Heart right ventricle (tissue), 16 donors: ENCODE measurements at regions of chr9 and their contacts with region 1.

Region 1: DNA sequence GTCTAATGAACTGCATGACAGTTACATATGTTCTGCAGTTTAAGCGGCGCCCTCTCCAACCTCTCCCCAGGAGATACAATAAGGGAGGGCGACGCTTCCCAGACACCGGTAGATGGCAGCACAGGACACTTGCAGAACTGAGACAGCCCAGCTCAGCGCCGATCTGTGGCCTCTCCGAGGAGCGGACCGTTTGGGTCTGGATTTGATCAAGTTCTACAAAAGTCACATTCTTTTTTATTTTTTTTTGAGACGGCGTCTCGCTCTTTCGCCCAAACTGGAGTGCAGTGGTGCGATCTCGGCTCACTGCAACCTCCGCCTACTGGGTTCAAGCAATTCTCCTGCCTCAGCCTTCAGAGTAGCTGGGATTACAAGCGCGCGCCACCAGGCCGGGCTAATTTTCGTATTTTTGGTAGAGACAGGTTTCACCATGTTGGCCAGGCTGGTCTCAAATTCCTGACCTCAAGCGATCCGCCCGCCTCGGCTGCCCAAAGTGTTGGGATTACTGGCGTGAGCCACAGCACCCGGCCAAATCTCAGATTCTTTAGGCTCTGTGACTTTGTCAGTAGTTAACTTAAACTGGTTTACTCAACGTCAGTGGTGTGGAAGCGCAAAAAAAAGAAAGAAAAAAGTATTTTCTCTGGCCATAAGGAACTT is 1.4 kb upstream of the ATOSB start:
- DNase-seq: peak; percentile 83 to 95
- ATAC-seq: peak; percentile 71 to 87 (median 82)
- H3K4me3 ChIP-seq: peak overlapping the region; percentile 26 to 78 (median 66)
- H3K27ac ChIP-seq: peak overlapping the region in 9 of 10 donors; percentile 84 to 98 (median 94)
- H3K4me1 ChIP-seq: peaks cover 6 to 48% (median 39%) of the 10 kb centered on the region in 9 donors
- H3K27me3 ChIP-seq: no peaks in the 10 kb centered on the region
- CTCF ChIP-seq: peak; percentile 94 to 97 (median 95)

Region 2: GRCh38 chr9:35258676-35259474 is 141.8 kb after region 1 on chr9:
- intact Hi-C with region 1: loop called (anchors 1 to 5 kb)
- DNase-seq: peak; percentile 60 to 73
- ATAC-seq: peak; percentile 47 to 78 (median 66)
- H3K4me3 ChIP-seq: no peak overlapping the region
- H3K27ac ChIP-seq: no peak overlapping the region
- H3K4me1 ChIP-seq: peaks cover 0 to 10% (median 5%) of the 10 kb centered on the region in 9 donors
- H3K27me3 ChIP-seq: no peaks in the 10 kb centered on the region
- CTCF ChIP-seq: peak; percentile 44 to 85 (median 72)

Region 3: DNA sequence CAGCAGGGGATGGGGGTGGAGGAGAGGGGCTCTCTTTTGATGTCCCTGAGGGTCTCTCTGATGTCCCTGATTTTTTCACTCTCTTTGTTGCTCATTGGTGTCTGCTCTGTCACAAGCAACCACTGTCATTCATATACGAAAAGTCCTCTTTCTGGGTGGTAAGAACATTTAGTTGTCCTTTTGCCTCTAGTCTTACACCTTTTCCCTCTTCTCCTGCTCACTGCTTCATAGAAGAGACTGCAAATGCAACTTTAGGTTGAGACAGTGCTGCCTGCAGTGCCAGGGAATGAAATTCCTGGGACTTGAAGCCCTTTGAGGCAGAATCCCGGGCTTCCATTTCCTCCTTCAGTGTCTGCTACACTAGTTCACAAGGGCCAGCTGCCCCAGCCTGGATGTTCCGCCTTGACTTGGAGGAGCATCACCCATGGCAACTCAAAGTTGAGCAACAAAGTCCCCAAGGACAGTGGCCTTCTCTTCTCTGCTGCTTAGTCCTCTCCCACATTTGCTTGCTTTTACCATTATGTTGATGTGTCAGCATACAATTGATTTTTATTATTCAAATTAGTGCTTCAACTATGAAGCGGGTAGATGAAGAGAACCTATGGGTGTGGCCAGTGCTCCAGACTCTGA is 278.2 kb after region 1 on chr9:
- intact Hi-C with region 1: loop called in 2 of 10 experiments (anchors 10 kb)
- DNase-seq: no peak
- ATAC-seq: peak in 2 of 8 donors; percentile 29 to 72
- H3K4me3 ChIP-seq: no peak overlapping the region
- H3K27ac ChIP-seq: no peak overlapping the region
- H3K4me1 ChIP-seq: peaks cover 0 to 3% (median 0%) of the 10 kb centered on the region in 9 donors
- H3K27me3 ChIP-seq: no peaks in the 10 kb centered on the region
- CTCF ChIP-seq: no peak

Region 4: DNA sequence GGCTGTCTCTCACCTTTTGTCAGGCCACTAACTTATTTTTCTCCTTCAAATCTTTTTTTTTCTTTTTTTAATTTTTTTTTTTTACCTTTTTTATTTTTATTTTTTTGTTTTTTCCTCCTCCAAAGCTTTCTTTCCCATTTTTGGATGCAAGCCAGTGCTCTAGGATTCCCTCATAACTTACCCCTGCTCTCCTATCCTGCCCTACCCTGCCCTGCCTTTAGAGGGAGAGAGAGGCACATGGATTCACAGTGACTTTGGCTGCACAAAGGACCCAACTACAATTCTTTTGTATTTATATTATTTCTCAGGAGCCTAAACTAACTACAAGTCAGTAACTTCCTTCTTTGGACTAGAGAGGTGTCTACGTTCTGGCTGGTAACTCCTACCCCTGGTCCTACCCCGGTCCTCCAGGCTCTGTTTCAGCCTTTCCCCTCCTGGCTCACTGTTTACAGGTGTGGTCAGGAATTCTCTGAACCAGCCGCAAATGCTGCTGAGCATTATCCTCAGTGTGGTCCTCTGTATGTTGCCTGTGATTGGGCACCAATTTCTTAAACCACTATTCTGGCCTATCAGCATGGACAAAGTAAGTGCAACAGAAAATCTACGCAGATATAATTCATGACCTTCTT is 364.4 kb after region 1 on chr9:
- intact Hi-C with region 1: loop called (anchors 1 to 10 kb)
- DNase-seq: peak in 1 of 2 donors; percentile 51
- ATAC-seq: peak in 4 of 8 donors; percentile 57 to 65 (median 60)
- H3K4me3 ChIP-seq: no peak overlapping the region
- H3K27ac ChIP-seq: no peak overlapping the region
- H3K4me1 ChIP-seq: peaks cover 0 to 6% (median 0%) of the 10 kb centered on the region in 9 donors
- H3K27me3 ChIP-seq: no peaks in the 10 kb centered on the region
- CTCF ChIP-seq: peak; percentile 26 to 72 (median 67)

Region 5: GRCh38 chr9:35548571-35548970 is 431.5 kb after region 1 on chr9:
- intact Hi-C with region 1: loop called in 3 of 10 experiments (anchors 10 kb)
- DNase-seq: no peak
- ATAC-seq: peak in 1 of 8 donors; percentile 49
- H3K4me3 ChIP-seq: no peak overlapping the region
- H3K27ac ChIP-seq: no peak overlapping the region
- H3K4me1 ChIP-seq: peaks cover 6 to 84% (median 34%) of the 10 kb centered on the region in 9 donors
- H3K27me3 ChIP-seq: no peaks in the 10 kb centered on the region
- CTCF ChIP-seq: no peak

Region 6: DNA sequence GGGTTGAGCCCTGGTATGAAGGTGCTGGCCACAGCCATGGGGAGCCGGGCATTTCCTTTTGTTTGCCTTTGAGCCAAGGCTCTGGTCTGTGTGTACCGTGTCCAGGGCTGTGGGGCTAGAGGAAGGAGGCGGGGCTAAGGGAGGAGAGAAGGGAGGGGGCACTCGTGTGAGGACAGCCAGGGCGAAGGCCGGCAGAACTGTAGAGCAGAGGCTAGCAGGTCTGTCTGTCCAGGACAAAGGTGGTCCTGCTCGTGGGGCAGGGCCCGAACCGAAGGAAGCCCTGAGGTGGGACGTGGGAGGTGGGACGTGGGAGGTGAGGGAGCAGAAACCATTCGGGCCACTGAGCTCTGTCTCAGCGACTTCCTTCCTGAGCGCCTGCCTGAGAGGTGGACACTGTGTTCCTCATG is 446.8 kb after region 1 on chr9:
- intact Hi-C with region 1: loop called in 4 of 10 experiments (anchors 5 to 10 kb)
- DNase-seq: peak; percentile 49 to 57
- ATAC-seq: peak; percentile 68 to 81 (median 72)
- H3K4me3 ChIP-seq: peak overlapping the region in 7 of 10 donors; percentile 7 to 39 (median 22)
- H3K27ac ChIP-seq: peak overlapping the region; percentile 13 to 70 (median 54)
- H3K4me1 ChIP-seq: peaks cover 13 to 43% (median 25%) of the 10 kb centered on the region in 9 donors
- H3K27me3 ChIP-seq: no peaks in the 10 kb centered on the region
- CTCF ChIP-seq: no peak